ENCODE measurements at regions of chr15 and their contacts with region 1.

Region 1: GRCh38 chr15:57561041-57561711 is 30.5 kb upstream of the MYZAP start:
- DNase-seq: peak; percentile 51
- H3K4me3 Mint-ChIP-seq: peak overlapping the region; percentile 27
- H3K27ac Mint-ChIP-seq: peak overlapping the region; percentile 88
- H3K4me1 Mint-ChIP-seq: peaks cover 42% of the 10 kb centered on the region
- H3K27me3 Mint-ChIP-seq: peaks cover 9% of the 10 kb centered on the region

Region 2: GRCh38 chr15:57586661-57587424 is 25.7 kb after region 1 on chr15:
- intact Hi-C with region 1: loop called (anchors 1 kb)
- DNase-seq: no peak
- H3K4me3 Mint-ChIP-seq: no peak overlapping the region
- H3K27ac Mint-ChIP-seq: no peak overlapping the region
- H3K4me1 Mint-ChIP-seq: peaks cover 14% of the 10 kb centered on the region
- H3K27me3 Mint-ChIP-seq: peaks cover 34% of the 10 kb centered on the region

Region 3: DNA sequence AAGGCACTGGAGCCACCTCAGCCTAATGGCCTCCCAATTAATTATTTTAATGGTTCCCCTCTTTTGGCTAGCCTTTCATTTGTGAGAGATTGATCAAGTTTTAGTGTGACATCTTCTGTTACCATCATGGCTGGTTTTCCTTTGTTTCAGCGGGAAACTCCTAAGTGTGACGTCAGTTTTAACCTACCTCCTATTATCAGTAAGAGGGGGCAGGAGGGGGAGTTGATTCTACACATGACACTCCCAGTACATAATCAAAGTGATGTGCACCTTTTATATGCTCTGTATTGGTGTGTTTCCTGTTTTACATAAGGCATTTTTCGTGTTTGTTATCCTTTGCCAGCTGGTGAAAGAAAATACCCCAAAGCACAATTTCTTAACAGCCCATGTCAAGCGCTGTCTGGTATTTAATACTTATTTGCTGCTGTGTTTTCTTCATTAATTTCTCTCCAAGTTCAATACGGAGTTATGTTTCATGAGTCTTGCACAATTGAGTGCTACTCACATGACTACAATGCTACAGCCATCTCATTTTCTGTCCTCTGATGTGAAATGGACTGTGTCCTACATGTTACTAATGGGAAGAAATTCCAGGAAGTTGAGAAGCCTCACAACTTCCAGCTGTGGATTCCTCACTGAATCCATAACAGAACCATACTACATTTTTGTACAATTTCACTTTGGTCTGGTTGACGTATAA is 93.1 kb after region 1 on chr15:
- intact Hi-C with region 1: loop called (anchors 5 kb)
- DNase-seq: no peak
- H3K4me3 Mint-ChIP-seq: no peak overlapping the region
- H3K27ac Mint-ChIP-seq: no peak overlapping the region
- H3K4me1 Mint-ChIP-seq: peaks cover 20% of the 10 kb centered on the region
- H3K27me3 Mint-ChIP-seq: peaks cover 2% of the 10 kb centered on the region

Region 4: DNA sequence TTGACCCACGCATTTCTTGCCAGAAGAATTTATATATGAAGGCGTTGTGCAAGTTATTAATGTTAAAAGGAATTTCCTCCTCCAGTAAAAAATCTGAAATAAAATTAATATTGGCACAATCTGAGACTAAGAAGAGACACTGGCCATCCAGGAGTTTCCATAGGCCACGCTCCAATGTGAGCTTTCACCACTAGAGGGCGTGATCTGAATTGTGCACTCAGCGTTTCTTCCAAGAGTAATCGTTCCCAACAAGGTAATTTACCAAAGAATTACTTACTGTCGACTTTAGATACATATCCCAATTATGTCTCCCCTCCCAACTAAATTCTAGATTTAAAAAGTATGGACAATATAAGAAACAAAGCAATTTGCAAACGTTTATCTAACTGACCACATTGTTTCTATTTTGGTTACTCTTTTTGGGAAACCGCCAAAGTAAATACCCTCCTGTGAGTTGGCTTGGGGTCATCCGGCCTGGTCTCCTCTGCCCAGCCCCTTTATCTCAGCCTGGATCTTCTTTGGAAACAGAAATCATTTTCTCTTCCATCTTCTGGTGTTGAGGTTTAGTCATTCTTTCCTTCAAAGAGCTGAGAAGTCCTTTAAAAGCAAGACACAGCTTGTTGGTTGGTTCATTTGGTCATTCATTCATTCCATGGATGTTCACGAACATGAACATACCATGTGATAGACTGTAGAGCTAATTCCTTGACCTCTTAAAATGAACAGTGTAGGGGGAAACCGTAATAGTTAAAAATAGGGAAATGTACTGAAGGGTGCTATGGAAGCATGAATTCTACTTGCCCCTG is 171.6 kb after region 1 on chr15:
- intact Hi-C with region 1: loop called (anchors 5 kb)
- DNase-seq: peak; percentile 26
- H3K4me3 Mint-ChIP-seq: no peak overlapping the region
- H3K27ac Mint-ChIP-seq: no peak overlapping the region
- H3K4me1 Mint-ChIP-seq: peaks cover 10% of the 10 kb centered on the region
- H3K27me3 Mint-ChIP-seq: peaks cover 8% of the 10 kb centered on the region

Region 5: DNA sequence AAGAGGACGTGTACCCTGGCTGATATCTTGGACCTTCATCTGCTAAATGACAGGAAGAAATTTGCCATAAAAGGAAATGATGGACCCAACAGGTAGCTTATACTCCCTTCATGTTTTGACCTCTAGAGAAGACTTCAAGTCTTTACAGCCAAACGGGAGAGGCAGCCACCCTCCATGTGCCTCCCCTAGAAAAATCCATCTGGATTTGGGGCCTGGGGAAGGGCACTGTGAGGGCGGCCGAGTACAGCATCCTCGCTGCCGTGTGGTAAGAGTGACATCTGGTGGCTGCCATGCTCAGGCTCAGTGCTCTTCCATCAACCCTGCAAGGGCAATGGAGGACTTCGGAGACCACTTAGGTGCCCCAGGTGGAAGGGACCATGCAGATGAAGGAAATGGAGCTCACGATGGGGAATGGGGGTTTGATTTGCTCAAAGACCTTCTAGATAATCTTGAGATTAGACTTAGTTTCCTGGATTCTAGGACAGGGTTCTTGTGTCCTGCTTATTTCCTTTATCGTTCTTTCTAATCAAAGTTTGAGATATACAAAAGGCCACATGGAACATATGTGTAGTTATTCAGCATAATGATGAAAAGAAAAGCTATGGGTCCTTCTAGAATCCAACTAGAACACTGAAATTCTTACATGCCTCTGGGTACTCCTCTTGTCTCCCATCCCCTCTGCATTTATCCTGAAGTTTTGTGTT is 621.4 kb after region 1 on chr15:
- intact Hi-C with region 1: loop called (anchors 2 kb)
- DNase-seq: no peak
- H3K4me3 Mint-ChIP-seq: no peak overlapping the region
- H3K27ac Mint-ChIP-seq: no peak overlapping the region
- H3K4me1 Mint-ChIP-seq: peaks cover 11% of the 10 kb centered on the region
- H3K27me3 Mint-ChIP-seq: peaks cover 24% of the 10 kb centered on the region

Measured in activated T-helper 1 cell treated with anti-CD3 and anti-CD28 coated beads, Interleukin-12 subunit alpha, Interleukin-12 subunit beta, Interleukin-2, Interleukin-4 antibody, amounts not matched to agents 30 ng/mL and 10 ng/mL and 1 ng/mL, durations not matched to agents 14 hours and 24 hours and 36 hours (primary cell).